Activated B cell treated with CpG ODN at 0.5 μM for 24 hours (primary cell): ENCODE measurements at regions of chr12 and their contacts with region 1.

Region 1: GRCh38 chr12:9673404-9674225 is 4.1 kb downstream of the CLEC2D start:
- DNase-seq: no peak
- ATAC-seq: peak; percentile 29
- H3K4me3 Mint-ChIP-seq: peak overlapping the region; percentile 95
- H3K27ac Mint-ChIP-seq: peak overlapping the region; percentile 96
- H3K4me1 Mint-ChIP-seq: peaks cover 82% of the 10 kb centered on the region
- H3K27me3 Mint-ChIP-seq: no peaks in the 10 kb centered on the region
- CTCF ChIP-seq: no peak

Region 2: DNA sequence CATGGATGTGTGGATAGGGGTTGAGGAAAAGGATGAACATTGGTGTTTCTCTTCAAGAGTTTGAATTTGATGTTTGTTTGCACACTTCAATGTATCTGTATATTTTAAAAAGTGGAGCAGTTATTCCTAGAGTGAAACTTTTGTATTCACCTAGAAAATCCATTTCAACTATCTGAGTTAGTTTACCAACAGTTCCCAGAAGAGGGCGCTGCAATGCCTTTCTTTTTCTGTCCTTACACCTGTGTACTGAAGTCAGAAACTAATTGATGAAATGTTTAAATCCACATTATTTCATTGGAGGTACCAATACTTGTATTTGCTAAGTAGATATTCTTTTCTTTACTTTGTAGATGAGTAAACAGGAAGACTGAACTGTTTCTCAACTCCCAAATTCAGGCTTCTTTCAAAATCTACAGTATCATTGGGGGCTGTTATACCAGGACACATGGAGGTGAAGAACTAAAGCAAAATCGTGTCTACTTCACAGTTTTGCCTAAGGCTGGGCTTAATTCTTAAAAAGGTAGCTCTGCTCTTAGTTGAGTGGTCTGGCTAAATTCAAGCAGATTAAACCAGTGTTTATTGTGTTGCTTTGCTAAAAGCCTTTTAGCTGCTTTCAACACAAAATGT is 39.3 kb before region 1 on chr12:
- CTCF ChIA-PET with region 1: interaction called, 14 read pairs
- POLR2A ChIA-PET with region 1: interaction called, 98 read pairs
- intact Hi-C with region 1: loop called (anchors 1 kb)
- DNase-seq: no peak
- ATAC-seq: peak; percentile 80
- H3K4me3 Mint-ChIP-seq: peak overlapping the region; percentile 66
- H3K27ac Mint-ChIP-seq: peak overlapping the region; percentile 86
- H3K4me1 Mint-ChIP-seq: peaks cover 60% of the 10 kb centered on the region
- H3K27me3 Mint-ChIP-seq: no peaks in the 10 kb centered on the region
- CTCF ChIP-seq: peak; percentile 57

Region 3: DNA sequence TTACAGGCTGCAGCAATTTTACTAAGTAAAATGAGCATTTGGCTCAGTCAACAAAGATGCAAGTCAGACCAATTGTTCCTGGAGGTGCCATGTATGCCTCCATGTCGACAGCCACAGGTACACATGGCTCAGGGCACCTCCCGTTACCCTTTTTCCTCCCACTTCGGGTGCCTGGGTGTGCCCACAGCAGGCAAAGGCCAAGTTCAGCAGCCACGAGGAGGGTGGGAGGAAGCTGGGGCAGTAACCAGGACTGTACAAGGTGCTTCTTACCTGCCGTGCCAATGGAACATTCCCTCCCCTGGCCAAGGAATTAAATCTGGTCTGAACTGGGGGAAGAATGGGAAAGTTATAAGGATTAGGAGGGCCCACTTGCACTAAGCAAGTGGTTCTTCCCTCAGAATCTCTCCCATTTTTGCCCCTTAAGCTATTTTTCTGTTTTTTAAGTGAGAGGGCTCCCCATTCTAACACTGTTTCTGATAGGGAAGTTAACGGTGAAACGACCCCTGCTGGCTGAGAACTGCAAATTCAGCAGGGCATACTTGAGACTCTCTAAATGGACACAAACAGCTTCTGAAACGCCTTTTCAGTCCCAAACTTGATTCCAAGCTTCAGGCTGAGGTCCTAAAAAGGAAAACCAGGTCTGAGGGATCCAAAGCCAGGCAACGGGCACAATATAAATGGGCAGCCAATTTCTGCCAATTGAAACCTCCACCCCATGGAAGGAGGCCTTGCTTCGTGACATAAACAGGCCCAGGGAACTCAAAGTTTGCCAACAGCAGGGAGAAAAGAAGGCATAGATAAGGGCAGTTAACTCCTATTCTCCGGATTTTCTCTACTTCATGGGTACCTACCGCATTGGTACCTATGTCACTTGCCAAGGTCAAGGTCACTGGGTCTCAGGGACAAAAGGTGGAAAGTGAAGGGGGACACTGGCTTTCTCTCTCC is 34.5 kb after region 1 on chr12:
- CTCF ChIA-PET with region 1: interaction called, 13 read pairs
- POLR2A ChIA-PET with region 1: interaction called, 49 read pairs
- intact Hi-C with region 1: loop called (anchors 5 kb)
- DNase-seq: no peak
- ATAC-seq: peak; percentile 50
- H3K4me3 Mint-ChIP-seq: peak overlapping the region; percentile 59
- H3K27ac Mint-ChIP-seq: peak overlapping the region; percentile 93
- H3K4me1 Mint-ChIP-seq: peaks cover 89% of the 10 kb centered on the region
- H3K27me3 Mint-ChIP-seq: no peaks in the 10 kb centered on the region
- CTCF ChIP-seq: peak; percentile 23

Region 4: DNA sequence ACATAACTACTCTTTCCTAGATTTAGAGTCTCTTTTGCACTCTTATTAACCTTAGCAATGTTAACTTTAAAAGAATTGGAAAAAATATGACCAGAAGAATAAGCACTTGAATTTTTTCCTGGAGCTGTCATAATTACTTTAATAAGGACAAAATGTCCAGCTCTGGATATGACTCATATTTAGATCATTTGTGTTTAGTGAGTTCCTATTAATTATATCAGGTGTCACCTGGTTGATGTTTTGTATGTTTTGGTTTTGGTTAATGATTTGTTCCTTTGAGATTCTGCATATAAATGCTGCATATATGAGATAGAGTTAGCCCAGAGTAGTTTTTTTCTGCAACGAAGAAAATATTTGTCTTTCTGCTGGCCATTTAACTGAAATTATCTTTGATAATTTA is 54.2 kb after region 1 on chr12:
- CTCF ChIA-PET with region 1: interaction called, 3 read pairs
- POLR2A ChIA-PET with region 1: interaction called, 103 read pairs
- intact Hi-C with region 1: loop called (anchors 1 kb)
- DNase-seq: no peak
- ATAC-seq: no peak
- H3K4me3 Mint-ChIP-seq: peak overlapping the region; percentile 64
- H3K27ac Mint-ChIP-seq: peak overlapping the region; percentile 77
- H3K4me1 Mint-ChIP-seq: peaks cover 85% of the 10 kb centered on the region
- H3K27me3 Mint-ChIP-seq: no peaks in the 10 kb centered on the region
- CTCF ChIP-seq: no peak

Region 5: DNA sequence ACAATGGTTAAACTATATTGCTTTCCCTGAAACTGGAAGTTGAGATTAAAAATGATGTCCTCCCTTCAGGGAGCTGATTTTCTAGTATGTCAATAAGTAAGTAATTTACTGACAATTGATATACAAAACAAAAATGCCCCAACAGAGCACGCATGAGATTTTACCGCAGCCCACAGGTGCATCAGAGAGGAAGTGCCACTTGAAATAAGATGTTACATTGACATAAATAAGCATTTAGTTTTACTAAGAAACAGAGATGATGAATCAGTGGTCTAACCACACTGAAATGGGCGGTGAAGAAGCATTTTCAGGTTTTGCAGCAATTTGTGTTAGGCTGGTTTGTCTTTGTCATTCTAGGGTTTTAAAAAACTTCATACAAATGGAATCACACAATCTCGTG is 68.1 kb after region 1 on chr12:
- CTCF ChIA-PET with region 1: interaction called, 11 read pairs
- POLR2A ChIA-PET with region 1: interaction called, 80 read pairs
- intact Hi-C with region 1: loop called (anchors 1 kb)
- DNase-seq: no peak
- ATAC-seq: peak; percentile 56
- H3K4me3 Mint-ChIP-seq: peak overlapping the region; percentile 75
- H3K27ac Mint-ChIP-seq: peak overlapping the region; percentile 94
- H3K4me1 Mint-ChIP-seq: peaks cover 72% of the 10 kb centered on the region
- H3K27me3 Mint-ChIP-seq: no peaks in the 10 kb centered on the region
- CTCF ChIP-seq: no peak